CD14-positive monocyte (primary cell): ENCODE measurements at regions of chr1 and their contacts with region 1.

Region 1: DNA sequence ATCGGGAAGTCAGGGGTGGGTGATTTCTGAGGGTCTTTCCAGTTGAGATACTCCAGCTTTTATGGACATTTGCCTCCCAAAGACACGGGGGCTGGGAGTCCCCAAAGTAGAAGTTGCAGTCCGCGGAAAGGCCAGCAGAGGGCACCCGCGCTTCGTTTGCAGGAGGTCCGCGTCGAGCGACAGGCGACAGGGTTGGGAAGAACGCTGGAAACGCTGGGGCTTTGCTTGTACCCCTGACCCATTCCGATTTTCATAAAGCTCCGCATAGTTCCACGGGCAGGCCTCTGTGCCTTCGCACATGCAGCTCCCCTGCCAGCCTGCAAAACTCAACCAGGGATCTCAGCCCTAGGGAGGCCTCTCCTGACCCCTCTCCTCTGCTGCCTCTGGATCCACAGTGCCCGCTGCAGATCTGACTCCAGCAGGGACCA is 44.2 kb upstream of the LAPTM5 start:
- DNase-seq: peak; percentile 62 to 72 (median 69)
- H3K4me3 ChIP-seq: no peak overlapping the region
- H3K4me3 Mint-ChIP-seq: peak overlapping the region in 1 of 2 donors; percentile 46
- H3K27ac ChIP-seq: no peak overlapping the region
- H3K27ac Mint-ChIP-seq: no peak overlapping the region
- H3K4me1 ChIP-seq: peaks cover 18 to 29% of the 10 kb centered on the region in 2 donors
- H3K4me1 Mint-ChIP-seq: peaks cover 32% of the 10 kb centered on the region
- H3K27me3 ChIP-seq: peaks cover 16 to 47% of the 10 kb centered on the region in 2 donors
- H3K27me3 Mint-ChIP-seq: peaks cover 38 to 58% (median 54%) of the 10 kb centered on the region in 3 donors
- CTCF ChIP-seq: peak; percentile 97

Region 2: DNA sequence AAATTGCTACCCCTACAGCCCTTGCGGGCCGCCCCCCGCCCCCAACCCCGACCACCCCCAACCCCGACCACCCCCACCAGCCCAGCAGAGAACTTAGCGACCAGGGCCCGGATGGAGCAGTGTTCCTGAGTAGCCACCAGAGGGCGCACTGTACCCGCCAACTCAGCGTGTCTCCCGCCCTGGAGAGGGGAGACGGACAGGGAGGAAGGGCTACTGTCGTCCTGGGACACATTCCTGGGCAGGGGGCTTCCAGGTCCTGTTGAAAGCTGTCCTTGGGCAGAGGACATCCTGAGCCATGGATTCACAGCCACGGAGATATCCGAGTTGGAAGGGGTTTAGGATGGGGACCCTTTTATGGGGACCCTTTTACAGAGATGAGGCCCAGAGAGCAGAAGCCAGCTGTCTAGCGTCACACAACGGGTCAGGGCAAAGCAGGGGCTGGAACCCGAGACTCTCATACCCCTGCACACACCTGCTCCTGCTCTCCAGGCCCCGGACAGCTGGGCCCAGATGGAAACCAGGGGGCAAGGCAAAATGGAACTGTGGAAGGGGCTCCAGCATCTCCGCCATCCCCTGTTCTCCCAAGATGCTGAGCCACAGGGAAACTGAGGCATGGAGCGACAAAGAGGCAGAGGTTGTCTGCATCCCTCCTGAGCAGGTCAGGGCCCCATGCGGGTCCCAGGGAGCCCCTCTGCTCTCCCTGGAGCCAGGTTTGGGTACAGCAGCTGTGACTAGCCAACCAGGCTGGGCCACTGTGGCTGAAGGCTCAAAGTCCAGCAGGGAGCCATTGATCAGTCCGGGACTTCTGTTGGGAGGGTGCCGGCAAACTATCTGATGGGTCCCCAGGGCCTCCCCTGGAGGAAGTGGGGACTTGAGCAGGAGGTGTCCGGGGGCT is 19.2 kb before region 1 on chr1:
- intact Hi-C with region 1: no loop called
- DNase-seq: peak; percentile 62 to 78 (median 73)
- H3K4me3 ChIP-seq: peak overlapping the region in 1 of 3 experiments; percentile 66
- H3K4me3 Mint-ChIP-seq: peak overlapping the region; percentile 45 to 67
- H3K27ac ChIP-seq: peak overlapping the region; percentile 37 to 74
- H3K27ac Mint-ChIP-seq: peak overlapping the region; percentile 83 to 93 (median 92)
- H3K4me1 ChIP-seq: peaks cover 53 to 69% of the 10 kb centered on the region in 2 donors
- H3K4me1 Mint-ChIP-seq: peaks cover 67% of the 10 kb centered on the region
- H3K27me3 ChIP-seq: peaks cover 0 to 8% of the 10 kb centered on the region in 2 donors
- H3K27me3 Mint-ChIP-seq: peaks cover 5 to 13% (median 9%) of the 10 kb centered on the region in 3 donors
- CTCF ChIP-seq: peak; percentile 79

Region 3: DNA sequence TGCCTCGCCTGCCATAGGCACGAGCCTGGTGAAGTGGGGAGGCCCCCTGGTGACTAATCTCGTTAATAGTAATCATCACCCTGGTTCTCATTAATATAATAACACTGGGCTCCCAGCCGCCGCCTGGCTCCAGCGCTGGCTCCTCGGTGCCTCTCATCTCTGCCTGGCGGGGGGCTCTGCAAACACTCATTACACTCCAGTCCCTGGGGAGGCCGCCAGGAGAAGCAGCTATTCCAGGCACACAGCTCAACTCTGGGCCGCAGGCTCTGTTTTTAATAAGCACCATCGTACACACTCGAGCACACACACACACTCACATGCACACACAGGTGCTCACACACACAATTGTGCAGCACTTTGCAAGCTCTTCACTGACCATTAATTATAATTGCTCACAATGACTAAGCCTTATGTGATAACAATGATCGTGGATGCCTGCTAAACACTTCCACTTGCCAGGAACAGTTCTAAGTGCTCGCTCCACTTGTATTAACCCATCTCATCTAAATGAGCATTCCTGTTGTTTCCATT is 54.5 kb after region 1 on chr1:
- intact Hi-C with region 1: no loop called
- DNase-seq: no peak
- H3K4me3 ChIP-seq: no peak overlapping the region
- H3K4me3 Mint-ChIP-seq: no peak overlapping the region
- H3K27ac ChIP-seq: no peak overlapping the region
- H3K27ac Mint-ChIP-seq: no peak overlapping the region
- H3K4me1 ChIP-seq: peaks cover 0 to 3% of the 10 kb centered on the region in 2 donors
- H3K4me1 Mint-ChIP-seq: peaks cover 12% of the 10 kb centered on the region
- H3K27me3 ChIP-seq: peaks cover 0 to 36% of the 10 kb centered on the region in 2 donors
- H3K27me3 Mint-ChIP-seq: peaks cover 18 to 55% (median 45%) of the 10 kb centered on the region in 3 donors
- CTCF ChIP-seq: no peak

Region 4: DNA sequence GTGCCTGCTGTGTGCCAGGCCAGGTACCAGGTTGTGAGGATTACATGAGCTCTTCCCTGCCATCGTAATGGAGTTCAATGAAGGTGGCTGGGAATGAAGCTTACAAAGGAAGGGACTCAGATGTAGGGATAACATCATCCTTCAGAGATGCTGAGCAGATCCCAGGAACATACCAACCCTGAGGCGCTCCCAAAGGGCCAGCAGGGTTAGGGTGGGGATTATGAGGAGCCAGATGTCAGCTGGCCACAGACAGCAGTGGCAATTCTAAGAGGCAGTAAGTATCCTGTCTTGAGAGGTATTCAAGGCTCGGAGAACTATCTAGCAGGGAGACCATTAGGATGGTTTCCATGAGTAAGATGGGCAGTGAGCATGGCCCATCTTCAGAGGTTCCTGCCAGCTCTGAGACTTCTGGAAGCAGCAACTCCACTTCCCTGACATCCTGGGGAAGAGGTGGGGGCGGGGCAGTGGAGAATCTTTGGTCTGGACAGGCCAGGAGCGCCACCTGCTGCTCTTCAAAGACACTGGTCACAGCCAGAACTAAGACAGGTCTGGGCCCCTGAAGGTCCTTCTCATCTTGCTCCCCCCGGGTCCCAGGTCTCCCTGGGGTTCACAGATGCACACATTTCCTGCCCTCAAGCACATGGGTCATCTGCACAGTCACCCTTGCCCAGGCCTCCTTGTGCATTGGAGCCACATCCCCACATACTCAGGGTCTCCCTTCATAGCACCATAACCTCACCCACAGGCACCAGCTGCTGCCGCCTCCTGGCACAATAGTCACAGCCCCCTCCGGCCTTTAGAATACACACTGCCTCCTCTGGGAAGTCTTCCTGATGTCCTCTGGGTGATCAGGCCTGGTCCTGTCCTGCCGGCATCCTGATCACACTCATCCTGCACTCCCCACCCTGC is 109.5 kb after region 1 on chr1:
- intact Hi-C with region 1: loop called (anchors 1 to 2 kb)
- DNase-seq: peak; percentile 60 to 76 (median 72)
- H3K4me3 ChIP-seq: peak overlapping the region in 1 of 3 experiments; percentile 18
- H3K4me3 Mint-ChIP-seq: peak overlapping the region in 1 of 2 donors; percentile 60
- H3K27ac ChIP-seq: no peak overlapping the region
- H3K27ac Mint-ChIP-seq: peak overlapping the region in 3 of 7 donors; percentile 26 to 56 (median 31)
- H3K4me1 ChIP-seq: peaks cover 68% of the 10 kb centered on the region in 2 donors
- H3K4me1 Mint-ChIP-seq: peaks cover 67% of the 10 kb centered on the region
- H3K27me3 ChIP-seq: peaks cover 14 to 28% of the 10 kb centered on the region in 2 donors
- H3K27me3 Mint-ChIP-seq: peaks cover 30 to 37% (median 31%) of the 10 kb centered on the region in 3 donors
- CTCF ChIP-seq: peak; percentile 82

Region 5: GRCh38 chr1:30929135-30929889 is 127.5 kb after region 1 on chr1:
- intact Hi-C with region 1: loop called (anchors 1 to 5 kb)
- DNase-seq: peak; percentile 42 to 59 (median 54)
- H3K4me3 ChIP-seq: no peak overlapping the region
- H3K4me3 Mint-ChIP-seq: no peak overlapping the region
- H3K27ac ChIP-seq: no peak overlapping the region
- H3K27ac Mint-ChIP-seq: peak overlapping the region in 2 of 7 donors; percentile 26 to 30
- H3K4me1 ChIP-seq: peaks cover 6 to 8% of the 10 kb centered on the region in 2 donors
- H3K4me1 Mint-ChIP-seq: peaks cover 8% of the 10 kb centered on the region
- H3K27me3 ChIP-seq: no peaks in the 10 kb centered on the region
- H3K27me3 Mint-ChIP-seq: peaks cover 2 to 4% (median 3%) of the 10 kb centered on the region in 3 donors
- CTCF ChIP-seq: peak; percentile 91